Aorta (tissue), 5 donors: ENCODE measurements at regions of chr1 and their contacts with region 1.

Region 1: GRCh38 chr1:167755654-167756053 is 33.9 kb downstream of the MPZL1 start:
- DNase-seq: no peak
- ATAC-seq: no peak
- H3K4me3 ChIP-seq: no peak overlapping the region
- H3K27ac ChIP-seq: no peak overlapping the region
- H3K4me1 ChIP-seq: peaks cover 3% of the 10 kb centered on the region in 2 donors
- H3K27me3 ChIP-seq: no peaks in the 10 kb centered on the region

Region 2: GRCh38 chr1:167708940-167709389 is 46.7 kb before region 1 on chr1:
- intact Hi-C with region 1: no loop called
- DNase-seq: no peak
- ATAC-seq: no peak
- H3K4me3 ChIP-seq: no peak overlapping the region
- H3K27ac ChIP-seq: no peak overlapping the region
- H3K4me1 ChIP-seq: no peaks in the 10 kb centered on the region
- H3K27me3 ChIP-seq: no peaks in the 10 kb centered on the region

Region 3: GRCh38 chr1:167739752-167740151 is 15.9 kb before region 1 on chr1:
- intact Hi-C with region 1: loop called in 1 of 2 experiments (anchors 2 kb)
- DNase-seq: no peak
- ATAC-seq: no peak
- H3K4me3 ChIP-seq: no peak overlapping the region
- H3K27ac ChIP-seq: no peak overlapping the region
- H3K4me1 ChIP-seq: peaks cover 0 to 4% of the 10 kb centered on the region in 2 donors
- H3K27me3 ChIP-seq: no peaks in the 10 kb centered on the region